Activated CD4-positive, alpha-beta memory T cell treated with anti-CD3 and anti-CD28 coated beads, Interleukin-2, amount 10 ng/mL, durations not matched to agents 7 days and 5 days (primary cell): ENCODE measurements at regions of chr5 and their contacts with region 1.

Region 1: GRCh38 chr5:80191991-80192398 is 63.9 kb downstream of the SERINC5 start:
- DNase-seq: peak; percentile 73
- H3K4me3 Mint-ChIP-seq: peak overlapping the region; percentile 56
- H3K27ac Mint-ChIP-seq: peak overlapping the region; percentile 97
- H3K4me1 Mint-ChIP-seq: peaks cover 82% of the 10 kb centered on the region
- H3K27me3 Mint-ChIP-seq: no peaks in the 10 kb centered on the region

Region 2: GRCh38 chr5:80134879-80135278 is 57.1 kb before region 1 on chr5:
- CTCF ChIA-PET with region 1: interaction called, 17 read pairs
- POLR2A ChIA-PET with region 1: interaction called, 41 read pairs
- DNase-seq: no peak
- H3K4me3 Mint-ChIP-seq: no peak overlapping the region
- H3K27ac Mint-ChIP-seq: peak overlapping the region; percentile 95
- H3K4me1 Mint-ChIP-seq: peaks cover 62% of the 10 kb centered on the region
- H3K27me3 Mint-ChIP-seq: no peaks in the 10 kb centered on the region

Region 3: DNA sequence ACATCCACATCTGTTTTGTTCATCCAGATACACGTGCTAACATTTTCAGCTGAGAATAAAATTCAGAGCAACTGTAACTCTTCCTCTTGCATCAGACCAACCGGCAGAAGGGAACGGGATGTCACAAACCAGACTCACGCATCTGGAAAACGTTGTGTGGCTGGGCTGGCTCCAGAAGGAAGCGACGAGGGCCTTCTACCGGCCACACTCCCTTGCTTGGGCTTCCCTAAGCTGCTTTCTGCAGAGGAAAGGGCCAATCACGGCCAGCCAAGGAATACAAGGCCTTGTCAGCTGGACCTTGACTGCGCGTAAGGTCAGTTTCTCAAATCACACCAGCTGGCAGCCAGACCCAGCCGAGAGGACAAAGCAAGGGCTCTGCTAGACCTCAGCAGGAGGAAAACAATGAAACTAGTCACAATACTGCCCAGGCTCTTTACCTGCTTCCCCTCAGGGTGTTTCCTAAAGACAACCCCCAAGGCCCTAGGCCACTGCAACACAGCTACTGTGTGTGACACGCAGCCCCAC is 50.8 kb before region 1 on chr5:
- CTCF ChIA-PET with region 1: interaction called, 17 read pairs
- POLR2A ChIA-PET with region 1: interaction called, 41 read pairs
- DNase-seq: no peak
- H3K4me3 Mint-ChIP-seq: no peak overlapping the region
- H3K27ac Mint-ChIP-seq: peak overlapping the region; percentile 90
- H3K4me1 Mint-ChIP-seq: peaks cover 76% of the 10 kb centered on the region
- H3K27me3 Mint-ChIP-seq: no peaks in the 10 kb centered on the region

Region 4: GRCh38 chr5:80161165-80161564 is 30.8 kb before region 1 on chr5:
- CTCF ChIA-PET with region 1: no interaction called
- POLR2A ChIA-PET with region 1: no interaction called
- DNase-seq: no peak
- H3K4me3 Mint-ChIP-seq: no peak overlapping the region
- H3K27ac Mint-ChIP-seq: no peak overlapping the region
- H3K4me1 Mint-ChIP-seq: peaks cover 2% of the 10 kb centered on the region
- H3K27me3 Mint-ChIP-seq: no peaks in the 10 kb centered on the region

Region 5: DNA sequence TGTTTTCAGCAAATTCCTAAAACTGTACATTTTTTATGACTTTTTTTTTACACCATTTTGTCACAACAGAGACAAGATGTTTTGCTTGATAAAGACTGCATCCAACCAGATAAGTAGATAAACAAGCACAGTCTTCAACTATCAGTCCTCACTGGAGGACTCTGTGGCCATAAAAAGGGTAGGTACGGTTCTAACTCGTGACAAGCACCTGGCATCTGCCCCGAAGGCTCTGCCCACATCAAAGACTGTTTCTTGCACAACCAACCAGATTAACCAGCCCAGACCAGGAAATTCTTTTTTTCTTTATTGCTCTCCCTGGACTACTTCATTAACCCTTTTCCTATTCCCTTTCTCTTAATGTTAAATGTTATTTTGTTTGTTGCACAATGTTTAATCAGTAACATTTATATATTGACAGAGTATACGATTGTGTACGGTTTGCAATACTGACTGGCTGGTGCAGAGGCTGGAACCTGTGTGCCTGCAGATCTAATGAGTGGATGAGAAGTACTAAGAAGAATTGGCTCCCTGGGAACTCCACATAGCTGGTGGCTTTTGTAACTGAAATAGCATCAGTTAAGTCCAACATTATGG is 10.3 kb before region 1 on chr5:
- CTCF ChIA-PET with region 1: interaction called, 6 read pairs
- POLR2A ChIA-PET with region 1: interaction called, 87 read pairs
- DNase-seq: peak; percentile 62
- H3K4me3 Mint-ChIP-seq: peak overlapping the region; percentile 40
- H3K27ac Mint-ChIP-seq: peak overlapping the region; percentile 89
- H3K4me1 Mint-ChIP-seq: peaks cover 71% of the 10 kb centered on the region
- H3K27me3 Mint-ChIP-seq: no peaks in the 10 kb centered on the region

Region 6: DNA sequence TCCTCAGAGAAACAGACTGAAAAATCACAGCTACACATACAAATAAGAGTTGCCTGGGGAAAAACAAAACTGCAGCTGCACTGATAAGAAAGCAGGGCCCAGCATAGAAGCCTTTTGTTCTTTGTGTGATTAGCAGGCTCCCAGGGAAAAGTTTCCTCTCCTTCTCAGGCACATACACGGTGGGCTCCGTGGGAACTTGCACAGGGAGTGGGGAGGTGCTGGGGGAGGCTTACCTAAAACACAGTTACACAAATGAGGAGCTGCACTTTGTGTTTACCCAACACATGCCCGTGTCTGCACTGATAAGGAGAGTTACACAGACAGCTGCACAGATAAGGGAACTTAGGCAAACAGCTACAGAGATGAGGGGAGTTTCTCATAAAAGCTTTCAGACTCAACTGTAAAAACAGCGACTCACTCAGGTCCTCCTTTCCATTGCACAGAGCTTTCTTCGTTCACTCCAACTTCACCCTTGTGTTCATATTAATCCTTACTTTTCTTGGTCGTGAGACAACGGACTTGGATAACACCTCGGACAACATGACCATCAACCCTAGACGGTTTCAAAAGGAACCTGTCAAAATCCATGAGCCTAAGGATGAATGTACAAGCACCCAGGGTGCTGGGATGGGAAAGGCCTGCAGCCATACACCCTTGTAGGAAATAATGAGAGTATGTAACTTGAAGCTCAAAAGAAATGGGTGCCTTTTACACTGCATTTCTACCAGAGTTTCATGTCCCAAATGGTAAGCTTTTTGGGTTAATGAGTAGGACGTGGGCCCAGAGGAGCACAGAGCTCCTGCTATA is 13.0 kb after region 1 on chr5:
- CTCF ChIA-PET with region 1: interaction called, 29 read pairs
- POLR2A ChIA-PET with region 1: interaction called, 49 read pairs
- DNase-seq: no peak
- H3K4me3 Mint-ChIP-seq: no peak overlapping the region
- H3K27ac Mint-ChIP-seq: peak overlapping the region; percentile 55
- H3K4me1 Mint-ChIP-seq: peaks cover 60% of the 10 kb centered on the region
- H3K27me3 Mint-ChIP-seq: no peaks in the 10 kb centered on the region

Region 7: DNA sequence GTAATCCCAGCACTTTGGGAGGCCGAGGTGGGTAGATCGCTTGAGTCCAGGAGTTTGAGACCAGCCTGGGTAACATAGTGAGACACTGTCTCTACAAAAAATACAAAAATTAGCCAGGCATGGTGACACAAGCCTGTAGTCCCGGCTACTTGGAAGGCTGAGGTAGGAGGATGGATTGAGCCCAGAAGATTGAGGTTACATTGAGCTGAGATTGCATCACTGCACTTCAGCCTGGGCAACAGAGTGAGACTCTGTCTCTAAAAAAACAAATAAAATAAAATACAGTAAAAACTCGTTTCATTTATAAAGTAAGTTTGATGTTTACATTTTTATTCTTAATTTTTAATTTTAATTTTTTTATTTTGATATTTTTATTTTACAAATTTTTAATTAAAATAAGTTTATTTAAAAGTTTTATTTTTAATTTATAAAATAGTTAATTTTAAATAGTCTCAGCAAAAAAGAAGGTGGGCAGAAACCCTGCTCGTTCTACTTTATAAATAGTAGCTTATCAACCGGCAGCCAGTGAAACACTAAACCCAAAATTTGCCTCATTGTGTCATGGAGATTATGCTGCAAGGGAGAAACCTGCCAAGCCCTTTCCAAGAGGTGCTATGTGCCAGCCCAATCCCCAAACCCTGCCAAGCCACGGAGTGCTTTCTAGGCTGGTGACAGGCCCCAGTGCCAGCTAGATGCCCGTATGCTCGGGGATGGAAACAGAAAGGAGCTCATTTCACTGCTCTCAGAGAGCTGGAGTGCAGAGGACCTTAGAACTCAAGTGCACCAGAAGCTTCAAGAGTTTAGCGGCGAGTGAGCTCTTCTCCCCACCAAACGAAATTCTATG is 25.0 kb after region 1 on chr5:
- CTCF ChIA-PET with region 1: interaction called, 4 read pairs
- POLR2A ChIA-PET with region 1: interaction called, 52 read pairs
- DNase-seq: peak; percentile 54
- H3K4me3 Mint-ChIP-seq: peak overlapping the region; percentile 69
- H3K27ac Mint-ChIP-seq: peak overlapping the region; percentile 82
- H3K4me1 Mint-ChIP-seq: peaks cover 79% of the 10 kb centered on the region
- H3K27me3 Mint-ChIP-seq: no peaks in the 10 kb centered on the region

Region 8: DNA sequence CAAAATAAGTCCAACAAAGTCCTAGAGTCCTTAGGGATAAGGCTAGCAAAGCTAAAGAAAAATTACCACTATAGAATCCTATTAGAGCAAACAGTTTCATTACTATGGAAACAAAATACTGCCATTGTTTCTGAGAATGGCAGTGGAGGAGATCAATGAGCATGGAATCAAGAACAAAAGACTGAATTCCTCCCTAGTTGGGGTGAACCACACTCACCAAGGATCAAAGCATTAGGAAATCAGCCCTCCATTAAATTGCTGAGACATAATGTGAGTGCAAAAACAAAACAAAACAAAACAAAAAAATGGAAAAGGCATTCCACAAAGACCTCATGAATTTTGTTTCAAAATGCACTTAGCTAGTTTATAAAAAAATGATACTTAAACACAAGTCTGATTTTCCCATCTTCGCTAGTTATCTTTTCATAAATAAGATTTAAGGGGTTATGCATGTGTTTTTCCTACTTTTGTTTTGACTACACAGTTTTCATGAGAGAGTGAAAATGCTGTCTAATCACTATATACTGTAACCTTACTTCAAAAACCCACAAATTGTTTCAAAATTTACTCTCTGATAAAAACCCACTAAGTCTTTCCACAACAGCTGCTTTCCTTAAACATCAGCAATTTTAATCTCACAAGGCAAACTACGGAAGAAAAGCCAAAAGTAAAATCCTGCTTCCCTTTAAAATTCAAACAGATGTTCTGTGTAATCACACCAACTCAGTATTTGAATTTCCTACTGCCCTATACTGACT is 54.2 kb after region 1 on chr5:
- CTCF ChIA-PET with region 1: interaction called, 4 read pairs
- POLR2A ChIA-PET with region 1: interaction called, 397 read pairs
- DNase-seq: no peak
- H3K4me3 Mint-ChIP-seq: peak overlapping the region; percentile 42
- H3K27ac Mint-ChIP-seq: peak overlapping the region; percentile 83
- H3K4me1 Mint-ChIP-seq: peaks cover 59% of the 10 kb centered on the region
- H3K27me3 Mint-ChIP-seq: no peaks in the 10 kb centered on the region